ENCODE measurements at regions of chr5 and their contacts with region 1.

Region 1: GRCh38 chr5:171484460-171484899 is 65.0 kb downstream of the FGF18 start:
- DNase-seq: no peak
- ATAC-seq: peak; percentile 56
- H3K4me3 ChIP-seq: no peak overlapping the region
- H3K27ac ChIP-seq: no peak overlapping the region
- H3K4me1 ChIP-seq: no peaks in the 10 kb centered on the region
- H3K27me3 ChIP-seq: no peaks in the 10 kb centered on the region

Region 2: GRCh38 chr5:171450423-171451331 is 33.8 kb before region 1 on chr5:
- intact Hi-C with region 1: no loop called
- DNase-seq: peak; percentile 87 to 95
- ATAC-seq: peak; percentile 83
- H3K4me3 ChIP-seq: peak overlapping the region; percentile 28 to 38
- H3K27ac ChIP-seq: peak overlapping the region; percentile 6 to 27
- H3K4me1 ChIP-seq: no peaks in the 10 kb centered on the region
- H3K27me3 ChIP-seq: no peaks in the 10 kb centered on the region

Region 3: DNA sequence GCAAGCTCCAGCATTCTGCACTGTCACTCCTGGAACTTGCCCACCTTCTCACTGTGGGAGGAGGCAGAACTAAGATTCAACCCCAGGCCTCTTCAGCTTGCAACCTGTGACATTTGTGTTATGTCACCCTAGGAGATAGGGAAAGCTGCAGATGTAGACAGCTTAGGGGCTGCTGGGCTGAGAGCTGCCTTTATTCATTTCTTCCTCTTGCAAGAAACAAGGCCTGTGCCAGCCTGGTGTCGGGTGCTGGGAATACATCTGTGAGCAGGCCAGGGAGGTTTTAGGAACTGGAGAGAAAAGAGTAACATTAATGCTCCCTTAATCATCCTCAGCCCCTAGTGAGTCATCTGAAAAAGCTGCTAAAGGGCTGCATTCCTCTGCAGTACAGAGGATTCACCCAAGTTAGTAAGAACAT is 36.7 kb after region 1 on chr5:
- intact Hi-C with region 1: loop called in 1 of 2 experiments (anchors 5 kb)
- DNase-seq: peak; percentile 86 to 89
- ATAC-seq: peak; percentile 60
- H3K4me3 ChIP-seq: no peak overlapping the region
- H3K27ac ChIP-seq: peak overlapping the region in 1 of 2 donors; percentile 71
- H3K4me1 ChIP-seq: no peaks in the 10 kb centered on the region
- H3K27me3 ChIP-seq: no peaks in the 10 kb centered on the region

Region 4: DNA sequence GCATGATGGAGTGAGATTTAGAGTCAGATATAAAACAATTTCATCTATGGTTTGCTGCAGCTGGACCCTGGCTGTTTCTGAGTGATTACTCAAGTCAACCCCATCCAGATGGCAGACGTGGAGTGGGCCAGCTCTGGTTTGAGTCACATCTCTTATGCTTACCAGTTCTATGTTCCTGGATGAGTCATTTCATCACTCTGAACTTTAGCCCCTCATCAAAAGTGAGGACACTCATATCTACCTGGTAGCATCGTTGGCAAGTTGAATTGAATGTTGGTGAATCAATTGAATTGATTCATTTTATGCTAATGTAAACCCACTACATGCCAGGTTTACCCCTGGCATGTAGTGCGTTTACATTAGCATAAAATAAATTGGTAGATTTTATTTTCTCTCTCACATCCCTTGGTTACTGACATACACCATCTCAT is 111.3 kb after region 1 on chr5:
- intact Hi-C with region 1: loop called (anchors 10 kb)
- DNase-seq: no peak
- ATAC-seq: no peak
- H3K4me3 ChIP-seq: no peak overlapping the region
- H3K27ac ChIP-seq: no peak overlapping the region
- H3K4me1 ChIP-seq: no peaks in the 10 kb centered on the region
- H3K27me3 ChIP-seq: no peaks in the 10 kb centered on the region